HCT116 (cell line): ENCODE measurements at regions of chr5 and their contacts with region 1.

Region 1: GRCh38 chr5:105506692-105507277 is 1944.2 kb upstream of the NUDT12 start:
- DNase-seq: peak; percentile 16
- ATAC-seq: peak; percentile 96
- H3K4me3 ChIP-seq: no peak overlapping the region
- H3K27ac ChIP-seq: no peak overlapping the region
- H3K4me1 ChIP-seq: no peaks in the 10 kb centered on the region
- H3K27me3 ChIP-seq: no peaks in the 10 kb centered on the region
- CTCF ChIP-seq: peak in 2 of 3 experiments; percentile 64 to 79; a peak in 4 of 6 replicates
- POLR2A ChIP-seq: no peak
- RAD21 ChIP-seq: peak; percentile 44

Region 2: GRCh38 chr5:105617436-105618215 is 110.8 kb after region 1 on chr5:
- CTCF ChIA-PET with region 1: no interaction called
- POLR2A ChIA-PET with region 1: no interaction called
- RAD21 ChIA-PET with region 1: no interaction called
- intact Hi-C with region 1: no loop called
- DNase-seq: no peak
- ATAC-seq: no peak
- H3K4me3 ChIP-seq: no peak overlapping the region
- H3K27ac ChIP-seq: no peak overlapping the region
- H3K4me1 ChIP-seq: no peaks in the 10 kb centered on the region
- H3K27me3 ChIP-seq: no peaks in the 10 kb centered on the region
- CTCF ChIP-seq: no peak
- POLR2A ChIP-seq: no peak
- RAD21 ChIP-seq: no peak

Region 3: DNA sequence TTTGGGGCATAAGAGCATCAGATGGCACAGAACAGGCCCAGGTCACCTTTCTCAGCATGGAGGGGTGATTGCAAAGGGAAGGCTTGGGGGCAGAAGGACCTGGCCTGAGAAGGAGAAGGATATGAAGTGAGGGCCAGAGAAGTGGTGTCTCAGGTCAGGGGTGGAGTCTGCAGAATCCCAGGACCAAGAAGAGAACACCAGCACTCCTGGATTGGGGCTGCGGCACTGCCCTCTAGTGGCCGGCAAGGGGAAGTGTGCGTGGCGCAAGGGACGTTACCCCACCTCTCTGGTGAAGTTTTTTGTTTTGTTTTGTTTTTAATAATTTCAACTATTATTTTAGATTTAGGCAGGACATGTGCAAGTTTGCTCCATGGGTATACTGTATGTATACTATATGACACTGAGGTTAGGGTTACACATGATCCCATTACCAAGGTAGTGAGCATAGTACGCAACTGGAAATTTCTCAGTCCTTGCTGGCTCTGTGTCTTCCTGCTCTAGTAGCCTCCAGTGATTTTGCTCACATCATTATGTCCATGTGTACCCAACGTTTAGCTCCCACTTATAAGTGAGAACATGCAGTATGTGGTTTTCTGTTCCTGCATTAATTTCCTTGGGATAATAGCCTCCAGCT is 615.3 kb after region 1 on chr5:
- CTCF ChIA-PET with region 1: no interaction called
- POLR2A ChIA-PET with region 1: no interaction called
- RAD21 ChIA-PET with region 1: no interaction called
- intact Hi-C with region 1: loop called (anchors 10 kb)
- DNase-seq: peak; percentile 8
- ATAC-seq: peak; percentile 96
- H3K4me3 ChIP-seq: no peak overlapping the region
- H3K27ac ChIP-seq: no peak overlapping the region
- H3K4me1 ChIP-seq: no peaks in the 10 kb centered on the region
- H3K27me3 ChIP-seq: no peaks in the 10 kb centered on the region
- CTCF ChIP-seq: peak; percentile 25 to 96 (median 96); a peak in 5 of 6 replicates
- POLR2A ChIP-seq: no peak
- RAD21 ChIP-seq: peak; percentile 69